Gastrocnemius medialis (tissue), 4 donors: ENCODE measurements at regions of chr3 and their contacts with region 1.

Region 1: DNA sequence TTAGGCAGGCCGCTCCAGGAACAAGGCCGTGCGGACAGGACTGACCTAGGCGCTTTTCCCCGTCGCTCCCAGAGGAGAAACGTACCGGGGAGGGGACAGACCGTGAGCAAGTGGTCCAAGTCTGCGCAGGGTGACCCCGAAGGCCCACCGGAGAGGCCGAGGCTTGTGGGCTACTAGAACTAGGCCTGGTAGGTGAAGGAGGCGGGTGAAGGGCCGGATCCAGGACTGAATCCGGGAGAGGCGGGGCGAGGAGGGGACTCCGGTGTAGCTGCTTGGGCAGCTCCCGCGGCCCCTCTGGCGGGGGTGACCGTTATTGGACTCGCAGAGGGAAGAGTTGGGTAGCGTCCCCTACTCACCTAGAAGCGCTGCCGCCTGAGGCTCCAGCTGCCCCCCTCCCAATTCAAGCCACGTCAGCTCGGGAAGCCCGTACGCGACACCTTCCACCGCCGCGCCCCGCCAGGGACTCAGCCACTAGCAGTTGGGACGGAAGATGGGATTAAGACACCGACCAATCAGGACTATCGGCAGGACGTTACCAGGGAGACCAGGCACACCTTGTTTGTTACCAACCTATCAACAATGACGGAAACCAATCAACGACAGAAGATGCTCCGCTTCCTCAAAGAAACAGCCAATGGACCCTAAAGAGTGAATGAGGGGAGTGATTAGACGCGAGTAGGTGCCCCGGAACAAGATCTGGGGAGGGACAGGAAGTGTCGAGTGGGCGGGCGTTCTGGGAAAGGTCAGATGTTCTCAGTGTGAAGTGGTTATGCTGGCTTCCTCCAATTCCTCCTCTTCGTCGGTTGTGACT is at the start of gene GOLGB1:
- DNase-seq: peak; percentile 96 to 97
- ATAC-seq: peak; percentile 98 to 100
- H3K4me3 ChIP-seq: peak within 1 kb of the TSS; percentile 68 to 95 (median 92)
- H3K27ac ChIP-seq: peak within 1 kb of the TSS; percentile 86 to 93 (median 89)
- H3K4me1 ChIP-seq: peaks cover 24 to 28% of the 10 kb centered on the region in 2 donors
- H3K27me3 ChIP-seq: peaks cover 0 to 2% (median 0%) of the 10 kb centered on the region in 3 donors
- CTCF ChIP-seq: peak in 1 of 5 experiments; percentile 12
- POLR2A ChIP-seq: peak; percentile 98
- total RNA-seq, gene GOLGB1: 18.1 to 31.6 (median 26.7) TPM

Region 2: GRCh38 chr3:121698901-121699300 is 50.6 kb before region 1 on chr3:
- in situ Hi-C with region 1: no loop called
- intact Hi-C with region 1: no loop called
- DNase-seq: no peak
- ATAC-seq: no peak
- H3K4me3 ChIP-seq: no peak overlapping the region
- H3K27ac ChIP-seq: peak overlapping the region in 1 of 4 donors; percentile 11
- H3K4me1 ChIP-seq: peaks cover 10 to 19% of the 10 kb centered on the region in 2 donors
- H3K27me3 ChIP-seq: no peaks in the 10 kb centered on the region
- CTCF ChIP-seq: no peak
- POLR2A ChIP-seq: no peak

Region 3: DNA sequence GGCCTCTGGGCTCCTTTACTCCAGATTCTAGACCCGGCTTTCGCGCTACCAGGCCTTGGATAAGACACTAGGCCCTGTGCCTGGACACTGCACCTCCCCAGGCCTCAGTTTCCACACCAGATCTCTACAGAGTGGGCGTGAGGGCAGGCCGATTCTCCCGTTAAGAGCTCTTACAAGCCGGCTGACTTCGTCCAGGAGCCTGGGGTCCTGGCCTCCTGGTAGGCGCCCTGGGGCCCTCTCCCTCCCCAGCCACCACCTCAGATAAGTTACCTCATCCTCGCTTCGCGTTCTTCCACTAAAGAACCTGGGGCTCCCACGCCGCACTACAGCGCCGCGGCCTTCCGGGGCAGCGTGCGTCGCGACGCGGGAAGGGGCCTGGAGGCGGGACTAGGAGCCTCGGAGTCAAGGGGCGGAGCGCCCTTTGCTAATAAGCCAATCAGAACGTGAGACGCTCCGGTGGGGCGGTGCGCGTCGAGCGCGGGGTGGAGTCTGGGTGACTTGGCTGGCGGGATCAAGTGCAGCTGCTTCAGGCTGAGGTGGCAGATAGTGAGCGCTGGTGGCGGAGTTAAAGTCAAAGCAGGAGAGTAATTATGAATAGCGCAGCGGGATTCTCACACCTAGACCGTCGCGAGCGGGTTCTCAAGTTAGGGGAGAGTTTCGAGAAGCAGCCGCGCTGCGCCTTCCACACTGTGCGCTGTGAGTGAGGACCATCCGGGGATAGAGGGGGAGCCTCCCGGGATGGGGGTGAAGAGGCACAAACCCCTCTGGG is 85.4 kb after region 1 on chr3 and contains the starts of genes EAF2 and IQCB1:
- in situ Hi-C with region 1: no loop called
- intact Hi-C with region 1: loop called (anchors 1 kb)
- DNase-seq: peak; percentile 92 to 94
- ATAC-seq: peak; percentile 98 to 99
- H3K4me3 ChIP-seq: peak within 1 kb of the TSS; percentile 73 to 96 (median 77)
- H3K27ac ChIP-seq: peak within 1 kb of the TSS; percentile 80 to 91 (median 88)
- H3K4me1 ChIP-seq: peaks cover 13 to 22% of the 10 kb centered on the region in 2 donors
- H3K27me3 ChIP-seq: no peaks in the 10 kb centered on the region
- CTCF ChIP-seq: no peak
- POLR2A ChIP-seq: peak; percentile 79 to 92
- total RNA-seq, gene EAF2: 2.6 to 5.7 (median 3.6) TPM
- total RNA-seq, gene IQCB1: 8.8 to 14.0 (median 11.8) TPM